Caco-2 (cell line): ENCODE measurements at regions of chr11 and their contacts with region 1.

Region 1: DNA sequence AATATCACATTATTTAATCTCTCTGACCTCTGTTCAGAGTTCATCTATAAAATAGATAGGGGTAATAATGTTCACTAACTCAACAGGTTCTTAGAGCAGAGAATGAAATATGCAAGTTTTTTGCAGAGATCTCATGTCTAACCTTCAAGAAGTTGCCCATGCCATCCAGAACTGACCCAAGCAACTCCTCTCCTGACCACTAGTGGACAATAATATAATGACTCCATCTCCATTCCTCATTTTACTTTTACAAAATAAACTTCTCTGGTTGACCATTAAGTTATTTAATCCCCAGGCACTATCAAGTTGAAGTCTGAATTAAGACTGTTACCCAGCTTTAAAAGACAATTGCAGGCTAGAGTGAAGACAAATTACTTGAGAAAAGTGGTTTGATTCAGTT is 382.6 kb downstream of the KCNA4 start:
- DNase-seq: no peak
- H3K4me3 ChIP-seq: no peak overlapping the region
- H3K4me3 Mint-ChIP-seq: no peak overlapping the region
- H3K27ac Mint-ChIP-seq: no peak overlapping the region
- H3K4me1 ChIP-seq: no peaks in the 10 kb centered on the region
- H3K4me1 Mint-ChIP-seq: no peaks in the 10 kb centered on the region
- H3K27me3 ChIP-seq: no peaks in the 10 kb centered on the region
- H3K27me3 Mint-ChIP-seq: peaks cover 10% of the 10 kb centered on the region
- CTCF ChIP-seq: no peak

Region 2: GRCh38 chr11:29448246-29448877 is 185.9 kb before region 1 on chr11:
- CTCF ChIA-PET with region 1: no interaction called
- POLR2A ChIA-PET with region 1: no interaction called
- intact Hi-C with region 1: no loop called
- DNase-seq: peak in 1 of 2 experiments; percentile 19
- H3K4me3 ChIP-seq: no peak overlapping the region
- H3K4me3 Mint-ChIP-seq: no peak overlapping the region
- H3K27ac Mint-ChIP-seq: no peak overlapping the region
- H3K4me1 ChIP-seq: no peaks in the 10 kb centered on the region
- H3K4me1 Mint-ChIP-seq: no peaks in the 10 kb centered on the region
- H3K27me3 ChIP-seq: no peaks in the 10 kb centered on the region
- H3K27me3 Mint-ChIP-seq: no peaks in the 10 kb centered on the region
- CTCF ChIP-seq: peak; percentile 24 to 50

Region 3: GRCh38 chr11:29527391-29527936 is 106.8 kb before region 1 on chr11:
- CTCF ChIA-PET with region 1: no interaction called
- POLR2A ChIA-PET with region 1: no interaction called
- intact Hi-C with region 1: loop called (anchors 1 kb)
- DNase-seq: peak in 1 of 2 experiments; percentile 38
- H3K4me3 ChIP-seq: no peak overlapping the region
- H3K4me3 Mint-ChIP-seq: no peak overlapping the region
- H3K27ac Mint-ChIP-seq: no peak overlapping the region
- H3K4me1 ChIP-seq: no peaks in the 10 kb centered on the region
- H3K4me1 Mint-ChIP-seq: peaks cover 7% of the 10 kb centered on the region
- H3K27me3 ChIP-seq: no peaks in the 10 kb centered on the region
- H3K27me3 Mint-ChIP-seq: no peaks in the 10 kb centered on the region
- CTCF ChIP-seq: peak; percentile 26 to 36

Region 4: GRCh38 chr11:29685361-29685760 is 51.1 kb after region 1 on chr11:
- CTCF ChIA-PET with region 1: no interaction called
- POLR2A ChIA-PET with region 1: no interaction called
- intact Hi-C with region 1: no loop called
- DNase-seq: no peak
- H3K4me3 ChIP-seq: no peak overlapping the region
- H3K4me3 Mint-ChIP-seq: no peak overlapping the region
- H3K27ac Mint-ChIP-seq: no peak overlapping the region
- H3K4me1 ChIP-seq: no peaks in the 10 kb centered on the region
- H3K4me1 Mint-ChIP-seq: no peaks in the 10 kb centered on the region
- H3K27me3 ChIP-seq: no peaks in the 10 kb centered on the region
- H3K27me3 Mint-ChIP-seq: peaks cover 3% of the 10 kb centered on the region
- CTCF ChIP-seq: no peak